Activated CD4-positive, alpha-beta memory T cell treated with anti-CD3 and anti-CD28 coated beads for 36 hours (primary cell): ENCODE measurements at regions of chr15 and their contacts with region 1.

Region 1: GRCh38 chr15:58957101-58957973 is 23.9 kb upstream of the SLTM start:
- DNase-seq: peak; percentile 58
- H3K4me3 Mint-ChIP-seq: no peak overlapping the region
- H3K27ac Mint-ChIP-seq: peak overlapping the region; percentile 29
- H3K4me1 Mint-ChIP-seq: peaks cover 12% of the 10 kb centered on the region
- H3K27me3 Mint-ChIP-seq: no peaks in the 10 kb centered on the region

Region 2: GRCh38 chr15:58227706-58228543 is 729.4 kb before region 1 on chr15:
- CTCF ChIA-PET with region 1: interaction called, 8 read pairs
- POLR2A ChIA-PET with region 1: no interaction called
- intact Hi-C with region 1: loop called (anchors 10 kb)
- DNase-seq: peak; percentile 77
- H3K4me3 Mint-ChIP-seq: no peak overlapping the region
- H3K27ac Mint-ChIP-seq: no peak overlapping the region
- H3K4me1 Mint-ChIP-seq: peaks cover 11% of the 10 kb centered on the region
- H3K27me3 Mint-ChIP-seq: peaks cover 17% of the 10 kb centered on the region

Region 3: GRCh38 chr15:58889363-58889762 is 68.0 kb before region 1 on chr15:
- CTCF ChIA-PET with region 1: no interaction called
- POLR2A ChIA-PET with region 1: no interaction called
- intact Hi-C with region 1: no loop called
- DNase-seq: no peak
- H3K4me3 Mint-ChIP-seq: no peak overlapping the region
- H3K27ac Mint-ChIP-seq: no peak overlapping the region
- H3K4me1 Mint-ChIP-seq: peaks cover 7% of the 10 kb centered on the region
- H3K27me3 Mint-ChIP-seq: no peaks in the 10 kb centered on the region

Region 4: DNA sequence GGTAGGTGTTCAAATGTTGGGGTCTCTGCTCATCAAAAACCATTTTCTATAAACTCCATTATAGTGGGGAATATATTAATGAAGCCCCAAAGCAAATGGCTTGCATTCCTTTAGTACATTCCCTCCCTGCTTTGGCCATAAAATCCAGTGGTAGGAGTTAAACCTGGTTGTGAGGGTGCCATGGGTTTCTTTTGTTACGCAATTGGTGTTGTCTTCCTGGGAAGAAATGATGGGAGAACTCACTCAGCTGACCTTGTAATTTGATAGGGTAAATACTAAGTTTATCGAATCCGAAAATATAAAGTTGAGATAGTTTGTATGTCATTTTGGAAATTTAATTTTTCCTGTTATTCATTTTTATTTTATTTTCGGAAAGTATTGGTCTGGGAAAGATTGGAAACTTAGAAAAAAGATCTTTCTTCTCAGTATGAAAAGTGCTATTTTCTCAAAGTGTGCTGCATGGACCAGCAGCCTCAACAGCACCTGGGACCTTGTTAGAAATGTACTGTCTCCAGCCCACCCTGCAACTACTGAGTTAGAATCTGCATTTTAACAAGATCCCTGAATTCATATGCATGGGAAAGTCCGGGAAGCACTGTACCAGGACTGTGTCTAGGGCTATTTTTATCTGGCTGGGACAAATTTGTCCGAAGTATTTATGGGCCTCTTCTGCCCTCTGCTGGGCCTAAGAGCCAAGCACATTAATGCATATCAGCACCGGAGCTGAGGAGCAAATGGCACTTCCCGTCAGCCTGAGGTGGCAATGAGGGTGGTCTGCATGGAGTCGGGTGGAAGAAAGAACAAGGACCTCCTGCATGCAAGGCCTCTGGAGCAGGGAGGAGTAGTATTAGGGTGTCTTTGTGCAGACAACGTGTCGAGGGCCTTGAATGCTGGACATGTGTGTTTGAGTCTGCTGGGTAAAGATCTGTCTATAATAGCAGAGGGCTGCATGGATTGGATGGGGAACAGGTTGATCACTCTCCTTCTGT is 535.3 kb after region 1 on chr15:
- CTCF ChIA-PET with region 1: interaction called, 48 read pairs
- POLR2A ChIA-PET with region 1: no interaction called
- intact Hi-C with region 1: loop called (anchors 2 kb)
- DNase-seq: peak; percentile 56
- H3K4me3 Mint-ChIP-seq: no peak overlapping the region
- H3K27ac Mint-ChIP-seq: no peak overlapping the region
- H3K4me1 Mint-ChIP-seq: peaks cover 2% of the 10 kb centered on the region
- H3K27me3 Mint-ChIP-seq: no peaks in the 10 kb centered on the region

Region 5: DNA sequence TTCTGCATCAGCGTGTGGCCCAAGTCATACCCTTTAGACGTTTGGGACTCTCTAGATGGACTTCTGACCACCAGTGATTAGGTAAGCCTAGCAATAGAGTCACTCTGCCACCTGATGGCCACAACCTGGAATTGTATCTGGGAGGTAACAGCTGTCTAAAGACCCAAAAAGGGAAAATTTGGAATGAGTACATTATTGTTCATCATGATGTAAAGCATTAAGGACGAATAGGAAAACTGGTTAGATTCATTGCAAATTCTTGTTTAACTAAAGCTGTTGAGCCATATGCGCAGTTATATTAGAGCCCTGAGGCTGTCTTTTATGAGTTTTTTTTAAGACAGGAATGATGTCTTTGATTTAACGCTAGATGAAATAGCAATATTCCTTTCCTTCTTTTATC is 544.3 kb after region 1 on chr15:
- CTCF ChIA-PET with region 1: interaction called, 48 read pairs
- POLR2A ChIA-PET with region 1: no interaction called
- intact Hi-C with region 1: no loop called
- DNase-seq: peak; percentile 36
- H3K4me3 Mint-ChIP-seq: no peak overlapping the region
- H3K27ac Mint-ChIP-seq: no peak overlapping the region
- H3K4me1 Mint-ChIP-seq: no peaks in the 10 kb centered on the region
- H3K27me3 Mint-ChIP-seq: no peaks in the 10 kb centered on the region

Region 6: DNA sequence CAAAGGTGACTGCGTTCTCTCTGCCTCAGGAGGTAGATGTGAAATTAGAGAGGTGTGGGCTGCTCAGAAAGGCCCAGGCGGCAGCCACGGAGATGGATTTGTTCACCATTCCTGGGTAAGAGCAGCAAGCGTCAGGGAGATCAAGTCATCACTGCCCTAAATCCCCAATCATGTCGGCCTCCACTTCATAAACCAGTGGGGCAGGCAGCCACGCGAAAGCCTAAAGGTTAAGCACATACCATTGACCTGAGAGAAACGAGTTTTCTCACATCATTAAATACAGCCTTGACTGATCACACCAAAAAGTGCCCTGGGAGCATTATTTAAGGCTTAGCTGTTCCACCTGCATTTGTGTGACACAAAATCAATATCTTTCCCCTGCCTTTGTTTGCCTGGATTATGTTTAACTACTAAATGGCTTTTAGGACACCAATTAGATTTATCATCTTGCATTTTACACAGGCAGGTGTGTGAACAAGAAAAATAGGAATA is 996.1 kb after region 1 on chr15:
- CTCF ChIA-PET with region 1: no interaction called
- POLR2A ChIA-PET with region 1: no interaction called
- intact Hi-C with region 1: no loop called
- DNase-seq: no peak
- H3K4me3 Mint-ChIP-seq: no peak overlapping the region
- H3K27ac Mint-ChIP-seq: no peak overlapping the region
- H3K4me1 Mint-ChIP-seq: no peaks in the 10 kb centered on the region
- H3K27me3 Mint-ChIP-seq: peaks cover 14% of the 10 kb centered on the region